OCI-LY7 (cell line): ENCODE measurements at regions of chr5 and their contacts with region 1.

Region 1: GRCh38 chr5:177006265-177006972 is at the start of gene UIMC1:
- DNase-seq: peak; percentile 96
- H3K4me3 ChIP-seq: peak within 1 kb of the TSS; percentile 95
- H3K27ac ChIP-seq: peak within 1 kb of the TSS; percentile 72
- H3K4me1 ChIP-seq: peaks cover 39% of the 10 kb centered on the region
- CTCF ChIP-seq: no peak
- total RNA-seq, gene UIMC1: 42.7 and 58.4 TPM in 2 replicates

Region 2: GRCh38 chr5:176537608-176538504 is 468.6 kb before region 1 on chr5:
- CTCF ChIA-PET with region 1: no interaction called
- POLR2A ChIA-PET with region 1: interaction called, 3 read pairs
- intact Hi-C with region 1: loop called (anchors 10 kb)
- DNase-seq: peak; percentile 100
- H3K4me3 ChIP-seq: peak overlapping the region; percentile 79
- H3K27ac ChIP-seq: peak overlapping the region; percentile 99
- H3K4me1 ChIP-seq: peaks cover 66% of the 10 kb centered on the region
- CTCF ChIP-seq: no peak

Region 3: DNA sequence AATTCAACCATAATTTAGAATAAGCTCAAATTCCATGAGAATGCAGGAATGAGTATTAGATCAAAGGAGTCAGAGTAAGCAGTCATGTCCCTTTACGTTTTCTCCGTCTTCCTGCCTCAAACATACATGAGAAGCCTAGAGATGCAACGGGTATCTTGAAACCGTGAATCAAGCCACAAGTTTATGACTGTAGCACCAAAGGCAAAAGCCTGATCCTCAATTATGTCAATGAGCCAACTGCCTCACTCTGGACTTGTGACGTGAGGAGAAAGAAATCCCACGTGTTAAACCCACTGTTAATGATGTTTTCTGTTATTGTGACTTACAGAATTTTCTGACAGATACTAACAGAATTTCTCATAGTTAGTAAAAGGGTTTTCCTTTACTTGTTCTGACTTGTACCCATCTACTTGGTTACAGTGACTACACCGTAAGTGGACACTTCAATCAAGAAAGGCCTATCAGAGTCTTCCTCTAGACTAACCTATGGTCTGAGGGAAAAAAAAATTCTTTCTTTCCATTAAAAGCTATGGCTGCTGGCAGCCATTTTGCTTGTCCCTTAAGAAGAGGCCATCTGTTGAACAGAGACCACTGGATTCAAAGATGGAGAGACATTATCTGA is 72.0 kb before region 1 on chr5:
- CTCF ChIA-PET with region 1: no interaction called
- POLR2A ChIA-PET with region 1: no interaction called
- intact Hi-C with region 1: no loop called
- DNase-seq: no peak
- H3K4me3 ChIP-seq: no peak overlapping the region
- H3K27ac ChIP-seq: no peak overlapping the region
- H3K4me1 ChIP-seq: peaks cover 9% of the 10 kb centered on the region
- CTCF ChIP-seq: no peak

Region 4: DNA sequence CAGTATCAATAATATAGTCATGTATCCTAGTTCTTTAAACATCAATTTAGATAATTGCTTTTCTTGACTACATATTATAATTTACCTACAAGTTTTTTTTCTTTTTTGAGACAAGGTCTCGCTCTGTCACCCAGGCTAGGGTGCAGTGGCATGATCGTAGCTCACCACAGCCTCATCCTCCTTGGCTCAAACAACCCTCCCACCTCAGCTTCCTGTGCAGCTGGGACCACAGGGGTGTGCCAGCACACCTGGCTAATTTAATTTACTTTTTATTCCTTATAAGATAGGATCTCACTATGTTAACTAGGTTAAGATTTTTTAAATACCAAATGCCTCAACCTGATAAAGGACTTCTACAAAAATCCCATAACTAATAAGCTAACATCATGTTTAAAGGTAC is 20.9 kb before region 1 on chr5:
- CTCF ChIA-PET with region 1: no interaction called
- POLR2A ChIA-PET with region 1: interaction called, 16 read pairs
- intact Hi-C with region 1: loop called (anchors 1 kb)
- DNase-seq: peak; percentile 92
- H3K4me3 ChIP-seq: peak overlapping the region; percentile 50
- H3K27ac ChIP-seq: peak overlapping the region; percentile 95
- H3K4me1 ChIP-seq: peaks cover 66% of the 10 kb centered on the region
- CTCF ChIP-seq: no peak

Region 5: DNA sequence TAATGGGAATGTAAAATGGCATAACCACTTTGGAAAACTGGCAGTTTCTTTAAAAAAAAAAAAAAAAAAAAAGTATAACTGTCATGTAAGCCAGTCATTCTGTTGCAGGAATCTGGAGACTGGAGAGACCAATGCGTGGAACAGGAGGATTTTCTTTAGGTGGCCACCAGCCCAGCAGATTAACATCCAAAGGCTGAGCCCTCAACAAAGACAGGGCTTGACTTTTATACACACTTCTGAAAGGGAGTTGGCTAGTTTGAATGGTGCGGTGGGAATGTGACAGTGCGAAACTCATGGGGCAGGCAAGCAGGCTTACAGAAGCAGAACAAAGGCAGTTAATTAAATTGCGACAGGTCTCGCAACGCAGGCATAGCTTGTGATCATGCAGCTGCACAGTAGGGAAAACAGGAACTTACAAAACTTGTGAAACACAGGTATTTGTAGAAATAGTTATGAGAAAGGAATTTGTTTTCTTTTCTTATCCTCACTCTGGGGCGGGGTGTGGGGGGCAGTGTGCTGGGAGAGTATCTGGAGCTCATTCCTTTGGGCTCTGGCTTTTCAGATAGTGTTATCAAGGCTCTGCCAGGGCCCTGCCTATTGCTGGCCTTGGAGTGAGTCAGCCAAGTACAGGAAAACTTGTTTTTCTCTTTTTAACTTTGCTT is 11.8 kb before region 1 on chr5:
- CTCF ChIA-PET with region 1: interaction called, 4 read pairs
- POLR2A ChIA-PET with region 1: interaction called, 16 read pairs
- intact Hi-C with region 1: loop called (anchors 1 kb)
- DNase-seq: peak; percentile 95
- H3K4me3 ChIP-seq: peak overlapping the region; percentile 47
- H3K27ac ChIP-seq: peak overlapping the region; percentile 92
- H3K4me1 ChIP-seq: peaks cover 74% of the 10 kb centered on the region
- CTCF ChIP-seq: no peak

Region 6: DNA sequence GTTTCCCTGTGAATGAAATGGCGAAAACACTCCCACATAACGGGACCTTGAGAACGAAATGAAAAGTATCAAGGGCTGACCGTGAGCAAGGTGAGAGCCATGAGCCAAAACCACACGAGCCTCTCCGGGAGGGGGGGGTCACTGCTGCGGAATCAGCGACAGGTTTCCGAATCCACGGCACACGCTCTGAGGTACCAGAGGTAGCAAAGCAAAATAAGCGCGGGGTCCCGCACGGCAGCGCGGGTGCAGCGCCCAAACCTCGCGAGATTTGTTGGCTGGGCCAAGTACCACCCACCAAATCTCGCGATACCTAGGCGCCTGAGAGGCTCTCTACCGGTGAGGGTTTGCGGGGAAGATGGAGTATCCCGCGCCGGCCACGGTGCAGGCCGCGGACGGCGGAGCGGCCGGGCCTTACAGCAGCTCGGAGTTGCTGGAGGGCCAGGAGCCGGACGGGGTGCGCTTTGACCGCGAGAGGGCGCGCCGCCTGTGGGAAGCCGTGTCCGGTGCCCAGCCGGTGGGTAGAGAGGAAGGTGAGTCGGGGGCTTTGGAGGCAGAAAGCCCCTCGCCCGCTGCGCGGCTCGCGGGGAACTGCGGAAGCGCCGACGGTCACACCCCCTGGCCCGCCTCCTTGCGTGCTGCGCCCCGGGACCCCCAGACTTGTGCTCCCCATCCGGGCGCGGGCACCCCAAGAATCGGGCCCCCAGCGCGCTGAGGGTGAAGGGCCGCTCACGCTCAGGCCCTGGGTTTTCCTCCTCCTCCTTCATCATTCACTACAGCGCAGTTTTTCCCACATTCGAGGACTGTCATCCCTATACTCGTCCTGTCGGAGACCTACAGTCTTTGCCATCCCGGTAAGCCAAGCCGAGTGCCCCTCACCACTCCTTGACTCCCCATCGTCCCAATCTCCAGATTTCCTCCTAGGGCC is 16.2 kb after region 1 on chr5 and contains the start of gene ZNF346:
- CTCF ChIA-PET with region 1: interaction called, 3 read pairs
- POLR2A ChIA-PET with region 1: interaction called, 74 read pairs
- intact Hi-C with region 1: no loop called
- DNase-seq: peak; percentile 99
- H3K4me3 ChIP-seq: peak within 1 kb of the TSS; percentile 83
- H3K27ac ChIP-seq: peak within 1 kb of the TSS; percentile 60
- H3K4me1 ChIP-seq: peaks cover 30% of the 10 kb centered on the region
- CTCF ChIP-seq: peak; percentile 72
- total RNA-seq, gene ZNF346: 31.8 and 36.6 TPM in 2 replicates

Region 7: GRCh38 chr5:177086924-177087706 is 80.7 kb after region 1 on chr5:
- CTCF ChIA-PET with region 1: no interaction called
- POLR2A ChIA-PET with region 1: no interaction called
- intact Hi-C with region 1: loop called (anchors 1 kb)
- DNase-seq: peak; percentile 69
- H3K4me3 ChIP-seq: peak overlapping the region; percentile 66
- H3K27ac ChIP-seq: no peak overlapping the region
- H3K4me1 ChIP-seq: peaks cover 27% of the 10 kb centered on the region
- CTCF ChIP-seq: peak; percentile 80